ENCODE measurements at regions of chr2 and their contacts with region 1.

Region 1: GRCh38 chr2:220165401-220165800 is 538.0 kb downstream of the SLC4A3 start:
- DNase-seq: no peak
- ATAC-seq: peak; percentile 38; the same call in 1 of the 3 replicates
- H3K4me3 ChIP-seq: no peak overlapping the region
- H3K27ac ChIP-seq: no peak overlapping the region
- H3K4me1 ChIP-seq: no peaks in the 10 kb centered on the region
- H3K27me3 ChIP-seq: no peaks in the 10 kb centered on the region
- CTCF ChIP-seq: peak; percentile 36
- EP300 ChIP-seq: no peak
- POLR2A ChIP-seq: no peak
- RAD21 ChIP-seq: no peak

Region 2: DNA sequence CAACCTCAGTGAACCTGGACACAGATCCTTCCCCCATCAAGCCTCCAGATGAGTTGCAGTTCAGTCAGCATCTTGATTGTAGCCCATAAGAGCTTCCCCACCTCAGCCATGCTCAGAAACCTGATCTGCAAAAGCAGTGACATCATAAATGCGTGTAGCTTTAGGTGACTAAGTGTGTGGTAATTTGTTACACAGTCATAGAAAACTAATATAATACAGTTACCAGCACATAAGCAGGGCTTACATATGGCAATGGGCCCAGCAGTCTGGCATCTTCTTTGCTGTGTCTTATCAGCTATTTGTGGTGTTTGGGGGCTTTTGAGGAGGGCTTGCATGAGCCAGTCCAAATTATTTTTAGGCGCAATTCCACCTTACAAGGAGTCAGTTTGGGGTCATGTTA is 269.0 kb after region 1 on chr2:
- CTCF ChIA-PET with region 1: no interaction called
- POLR2A ChIA-PET with region 1: no interaction called
- in situ Hi-C with region 1: no loop called
- intact Hi-C with region 1: no loop called
- DNase-seq: no peak
- ATAC-seq: no peak
- H3K4me3 ChIP-seq: no peak overlapping the region
- H3K27ac ChIP-seq: no peak overlapping the region
- H3K4me1 ChIP-seq: no peaks in the 10 kb centered on the region
- H3K27me3 ChIP-seq: no peaks in the 10 kb centered on the region
- CTCF ChIP-seq: no peak
- EP300 ChIP-seq: no peak
- POLR2A ChIP-seq: no peak
- RAD21 ChIP-seq: no peak

Region 3: GRCh38 chr2:221573430-221574230 is 1408.2 kb after region 1 on chr2:
- CTCF ChIA-PET with region 1: no interaction called
- POLR2A ChIA-PET with region 1: no interaction called
- in situ Hi-C with region 1: loop called (anchors 25 kb)
- intact Hi-C with region 1: no loop called
- DNase-seq: peak; percentile 36
- ATAC-seq: peak; percentile 97
- H3K4me3 ChIP-seq: peak overlapping the region; percentile 2 to 68 (median 37); a peak in 3 of 6 replicates
- H3K27ac ChIP-seq: no peak overlapping the region
- H3K4me1 ChIP-seq: peaks cover 7% of the 10 kb centered on the region
- H3K27me3 ChIP-seq: peaks cover 4 to 45% of the 10 kb centered on the region in 2 experiments; a peak in 4 of 5 replicates
- CTCF ChIP-seq: peak; percentile 100
- EP300 ChIP-seq: no peak
- POLR2A ChIP-seq: no peak
- RAD21 ChIP-seq: peak; percentile 98

Measured in HepG2 (cell line).